Mammary epithelial cell (primary cell): ENCODE measurements at regions of chr4 and their contacts with region 1.

Region 1: DNA sequence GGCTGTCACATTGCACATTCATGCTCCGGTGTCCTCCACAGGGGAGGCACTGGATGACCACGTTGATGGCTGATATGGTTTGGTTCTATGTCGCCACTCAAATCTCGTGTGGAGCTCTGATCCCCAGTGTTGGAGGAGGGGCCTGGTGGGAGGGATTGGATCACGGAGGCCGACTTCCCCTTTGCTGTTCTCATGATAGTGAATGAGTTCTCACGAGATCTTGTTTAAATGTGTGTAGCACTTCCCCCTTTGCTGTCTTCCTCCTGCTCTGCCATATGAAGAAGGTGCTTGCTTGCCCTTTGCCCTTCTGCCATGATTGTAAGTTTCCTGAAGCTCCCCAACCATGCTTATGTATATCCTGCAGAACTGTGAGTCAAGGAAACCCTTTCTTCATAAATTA is 22.3 kb upstream of the NAT8L start:
- DNase-seq: no peak
- H3K4me3 ChIP-seq: no peak overlapping the region
- H3K27ac ChIP-seq: no peak overlapping the region
- H3K4me1 ChIP-seq: peaks cover 7% of the 10 kb centered on the region
- H3K27me3 ChIP-seq: peaks cover 4% of the 10 kb centered on the region
- CTCF ChIP-seq: no peak

Region 2: GRCh38 chr4:1939664-1940509 is 97.0 kb before region 1 on chr4:
- CTCF ChIA-PET with region 1: no interaction called
- dilution Hi-C with region 1: loop called (anchors 5 kb)
- in situ Hi-C with region 1: no loop called
- intact Hi-C with region 1: no loop called
- DNase-seq: peak; percentile 88
- H3K4me3 ChIP-seq: no peak overlapping the region
- H3K27ac ChIP-seq: peak overlapping the region; percentile 24
- H3K4me1 ChIP-seq: peaks cover 19% of the 10 kb centered on the region
- H3K27me3 ChIP-seq: no peaks in the 10 kb centered on the region
- CTCF ChIP-seq: no peak

Region 3: DNA sequence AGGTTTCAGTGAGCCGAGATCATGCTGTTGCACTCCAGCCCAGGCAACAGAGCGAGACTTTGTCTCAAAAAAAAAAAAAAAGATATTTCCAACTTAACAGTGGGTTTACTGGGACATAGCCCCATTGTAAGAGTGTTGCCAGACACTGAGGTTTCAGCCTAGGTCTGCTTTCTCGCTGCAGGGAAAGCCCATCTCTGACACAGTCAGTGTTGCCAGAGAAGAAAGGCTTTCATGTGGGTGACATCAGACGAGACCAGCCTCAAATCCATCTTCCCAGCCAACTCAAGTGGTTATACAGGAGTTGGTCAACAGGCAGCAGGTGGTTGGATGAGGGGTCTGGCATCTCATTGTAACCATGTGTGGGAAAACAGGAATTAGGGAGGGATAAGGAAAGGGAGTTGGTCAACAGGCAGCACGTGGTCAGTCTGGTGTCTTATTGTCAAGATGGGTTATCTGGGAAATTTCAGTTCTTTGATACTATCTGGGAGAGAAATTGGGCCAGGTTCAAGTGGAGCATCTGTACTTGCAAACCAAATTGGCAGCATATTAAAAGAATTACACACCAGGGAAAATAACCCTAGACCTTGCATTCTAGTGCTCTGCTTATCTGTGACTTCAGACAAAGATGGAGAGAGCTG is 69.2 kb before region 1 on chr4:
- CTCF ChIA-PET with region 1: no interaction called
- dilution Hi-C with region 1: no loop called
- in situ Hi-C with region 1: no loop called
- intact Hi-C with region 1: no loop called
- DNase-seq: no peak
- H3K4me3 ChIP-seq: no peak overlapping the region
- H3K27ac ChIP-seq: no peak overlapping the region
- H3K4me1 ChIP-seq: no peaks in the 10 kb centered on the region
- H3K27me3 ChIP-seq: no peaks in the 10 kb centered on the region
- CTCF ChIP-seq: no peak

Region 4: GRCh38 chr4:2091990-2092668 is 55.3 kb after region 1 on chr4:
- CTCF ChIA-PET with region 1: no interaction called
- dilution Hi-C with region 1: loop called (anchors 5 kb)
- in situ Hi-C with region 1: no loop called
- intact Hi-C with region 1: no loop called
- DNase-seq: no peak
- H3K4me3 ChIP-seq: no peak overlapping the region
- H3K27ac ChIP-seq: no peak overlapping the region
- H3K4me1 ChIP-seq: peaks cover 9% of the 10 kb centered on the region
- H3K27me3 ChIP-seq: no peaks in the 10 kb centered on the region
- CTCF ChIP-seq: no peak

Region 5: GRCh38 chr4:2135083-2135482 is 98.2 kb after region 1 on chr4:
- CTCF ChIA-PET with region 1: no interaction called
- dilution Hi-C with region 1: loop called (anchors 5 kb)
- in situ Hi-C with region 1: no loop called
- intact Hi-C with region 1: no loop called
- DNase-seq: no peak
- H3K4me3 ChIP-seq: no peak overlapping the region
- H3K27ac ChIP-seq: no peak overlapping the region
- H3K4me1 ChIP-seq: no peaks in the 10 kb centered on the region
- H3K27me3 ChIP-seq: no peaks in the 10 kb centered on the region
- CTCF ChIP-seq: no peak